Endothelial cell of umbilical vein (primary cell): ENCODE measurements at regions of chr19 and their contacts with region 1.

Region 1: GRCh38 chr19:13150187-13150930 is at the starts of genes IER2 and STX10:
- DNase-seq: peak; percentile 96
- H3K4me3 ChIP-seq: peak within 1 kb of the TSS; percentile 50 to 97 (median 69)
- H3K27ac ChIP-seq: peak within 1 kb of the TSS; percentile 90
- H3K4me1 ChIP-seq: peaks cover 12% of the 10 kb centered on the region
- H3K27me3 ChIP-seq: no peaks in the 10 kb centered on the region
- CTCF ChIP-seq: peak in 1 of 2 donors; percentile 55
- POLR2A ChIP-seq: peak; percentile 68
- total RNA-seq, gene IER2: 81.6 and 97.0 TPM in 2 replicates
- total RNA-seq, gene STX10: 63.1 and 67.9 TPM in 2 replicates

Region 2: DNA sequence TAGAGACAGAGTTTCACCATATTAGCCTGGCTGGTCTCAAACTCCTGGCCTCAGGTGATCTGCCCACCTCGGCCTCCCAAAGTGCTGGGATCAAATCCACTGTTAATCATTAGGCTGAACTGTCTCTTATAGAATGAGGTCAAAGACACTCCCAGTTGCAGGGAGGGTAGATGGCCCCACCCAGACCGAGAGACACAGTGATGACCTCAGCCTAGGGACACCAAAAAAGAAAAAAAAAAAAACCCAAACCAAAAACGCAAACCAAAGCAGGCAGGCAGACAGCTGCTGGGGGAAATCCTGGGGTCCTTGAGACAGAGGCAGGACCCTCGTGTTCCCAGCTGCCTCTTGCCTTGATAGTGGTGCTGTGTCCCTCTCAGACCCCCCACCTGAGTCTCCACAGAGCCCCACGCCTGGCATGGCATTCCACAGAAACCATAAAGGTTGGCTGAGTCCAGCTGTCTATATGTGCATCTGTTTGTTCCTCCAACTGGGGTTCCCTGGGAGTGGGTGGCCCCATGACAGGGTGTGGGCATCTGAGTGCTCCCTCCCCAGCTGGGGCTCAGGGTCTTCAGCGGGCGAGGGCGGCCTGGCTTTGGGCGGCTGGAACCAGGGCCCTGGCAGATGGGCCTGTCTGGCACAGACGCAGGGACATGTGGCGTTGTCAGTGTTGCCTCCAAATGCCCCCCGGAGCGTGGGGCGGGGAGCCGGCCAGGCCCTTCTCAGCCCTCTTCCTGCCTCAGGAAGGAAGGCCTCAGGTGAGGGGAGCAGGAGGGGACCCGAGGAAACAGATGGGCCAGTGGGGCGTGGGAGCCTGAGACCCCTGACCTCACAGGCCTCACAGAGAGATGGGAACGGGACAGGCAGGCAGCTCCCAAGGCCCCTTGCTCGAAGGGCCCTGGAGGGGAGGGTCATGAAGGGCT is 175.8 kb before region 1 on chr19:
- CTCF ChIA-PET with region 1: interaction called, 8 read pairs
- POLR2A ChIA-PET with region 1: no interaction called
- dilution Hi-C with region 1: no loop called
- intact Hi-C with region 1: loop called (anchors 5 kb)
- DNase-seq: no peak
- H3K4me3 ChIP-seq: no peak overlapping the region
- H3K27ac ChIP-seq: no peak overlapping the region
- H3K4me1 ChIP-seq: no peaks in the 10 kb centered on the region
- H3K27me3 ChIP-seq: no peaks in the 10 kb centered on the region
- CTCF ChIP-seq: no peak
- POLR2A ChIP-seq: no peak

Region 3: GRCh38 chr19:13104360-13104847 is 46.0 kb before region 1 on chr19:
- CTCF ChIA-PET with region 1: interaction called, 22 read pairs
- POLR2A ChIA-PET with region 1: interaction called, 8 read pairs
- dilution Hi-C with region 1: no loop called
- intact Hi-C with region 1: loop called (anchors 1 kb)
- DNase-seq: peak; percentile 94
- H3K4me3 ChIP-seq: no peak overlapping the region
- H3K27ac ChIP-seq: peak overlapping the region; percentile 60
- H3K4me1 ChIP-seq: peaks cover 41% of the 10 kb centered on the region
- H3K27me3 ChIP-seq: no peaks in the 10 kb centered on the region
- CTCF ChIP-seq: peak; percentile 85 to 95
- POLR2A ChIP-seq: peak; percentile 80

Region 4: DNA sequence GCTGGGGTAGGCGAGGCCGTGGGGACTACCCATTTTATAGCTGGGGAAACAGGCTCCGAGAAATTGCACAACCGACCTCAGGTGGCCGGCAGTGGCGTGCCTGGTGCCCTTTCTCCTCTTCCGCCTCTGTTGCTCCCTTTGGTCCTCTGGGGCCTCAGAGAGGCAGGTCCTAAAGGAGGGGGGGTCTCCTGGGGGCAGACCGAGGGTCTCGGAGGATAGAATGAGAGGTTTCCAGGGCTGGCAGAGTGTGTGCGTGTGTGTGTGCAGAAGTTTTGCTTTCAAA is 11.5 kb before region 1 on chr19:
- CTCF ChIA-PET with region 1: no interaction called
- POLR2A ChIA-PET with region 1: no interaction called
- dilution Hi-C with region 1: no loop called
- intact Hi-C with region 1: no loop called
- DNase-seq: no peak
- H3K4me3 ChIP-seq: no peak overlapping the region
- H3K27ac ChIP-seq: no peak overlapping the region
- H3K4me1 ChIP-seq: no peaks in the 10 kb centered on the region
- H3K27me3 ChIP-seq: no peaks in the 10 kb centered on the region
- CTCF ChIP-seq: no peak
- POLR2A ChIP-seq: no peak

Region 5: DNA sequence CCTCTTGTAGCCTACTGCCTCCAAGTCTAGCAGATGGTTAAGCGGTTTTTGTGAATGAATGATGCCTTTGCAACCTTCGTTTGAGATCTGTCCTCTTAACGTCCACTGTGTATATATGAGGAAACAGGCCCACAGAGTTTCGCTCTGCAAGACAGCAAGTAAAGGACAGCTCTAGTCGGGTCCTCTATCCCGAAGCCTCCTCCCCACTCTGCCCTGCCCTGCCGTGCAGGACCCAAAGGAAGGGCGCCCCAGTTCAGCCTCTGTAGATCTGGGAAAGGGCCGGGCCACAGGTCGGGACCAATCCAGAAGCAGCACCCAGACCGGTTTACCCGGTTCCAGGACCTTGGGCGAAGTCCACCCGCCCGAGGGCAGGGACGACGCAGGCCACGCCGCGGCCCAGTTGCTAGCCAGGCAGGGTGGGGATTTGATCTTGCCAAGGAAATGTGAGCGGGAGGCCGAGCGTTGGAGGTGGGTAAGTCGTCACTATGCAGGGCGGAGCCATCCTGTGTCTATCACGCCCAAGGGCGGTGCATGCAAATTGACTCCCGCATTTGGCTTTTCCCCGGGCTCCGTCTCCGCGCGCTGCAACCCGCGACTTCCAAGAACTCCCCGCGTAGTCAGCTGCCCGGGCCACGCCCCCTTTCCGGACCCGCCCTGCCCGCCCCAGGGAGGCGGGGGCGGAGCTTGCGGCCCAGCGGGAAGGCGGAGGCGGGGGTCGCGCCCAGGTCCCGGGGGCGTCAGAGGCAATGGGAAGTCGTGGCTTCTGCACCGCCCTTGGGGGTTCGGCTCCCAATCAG is 12.4 kb after region 1 on chr19:
- CTCF ChIA-PET with region 1: interaction called, 24 read pairs
- POLR2A ChIA-PET with region 1: interaction called, 25 read pairs
- dilution Hi-C with region 1: no loop called
- intact Hi-C with region 1: loop called (anchors 1 kb)
- DNase-seq: peak; percentile 97
- H3K4me3 ChIP-seq: peak overlapping the region in 1 of 3 experiments; percentile 28
- H3K27ac ChIP-seq: peak overlapping the region; percentile 99
- H3K4me1 ChIP-seq: peaks cover 42% of the 10 kb centered on the region
- H3K27me3 ChIP-seq: no peaks in the 10 kb centered on the region
- CTCF ChIP-seq: no peak
- POLR2A ChIP-seq: peak; percentile 69

Region 6: GRCh38 chr19:13262450-13262849 is 112.1 kb after region 1 on chr19:
- CTCF ChIA-PET with region 1: interaction called, 9 read pairs
- POLR2A ChIA-PET with region 1: interaction called, 4 read pairs
- dilution Hi-C with region 1: no loop called
- intact Hi-C with region 1: loop called (anchors 1 kb)
- DNase-seq: peak; percentile 70
- H3K4me3 ChIP-seq: no peak overlapping the region
- H3K27ac ChIP-seq: no peak overlapping the region
- H3K4me1 ChIP-seq: peaks cover 10% of the 10 kb centered on the region
- H3K27me3 ChIP-seq: peaks cover 0 to 2% of the 10 kb centered on the region in 2 experiments
- CTCF ChIP-seq: peak; percentile 32 to 46
- POLR2A ChIP-seq: no peak

Region 7: DNA sequence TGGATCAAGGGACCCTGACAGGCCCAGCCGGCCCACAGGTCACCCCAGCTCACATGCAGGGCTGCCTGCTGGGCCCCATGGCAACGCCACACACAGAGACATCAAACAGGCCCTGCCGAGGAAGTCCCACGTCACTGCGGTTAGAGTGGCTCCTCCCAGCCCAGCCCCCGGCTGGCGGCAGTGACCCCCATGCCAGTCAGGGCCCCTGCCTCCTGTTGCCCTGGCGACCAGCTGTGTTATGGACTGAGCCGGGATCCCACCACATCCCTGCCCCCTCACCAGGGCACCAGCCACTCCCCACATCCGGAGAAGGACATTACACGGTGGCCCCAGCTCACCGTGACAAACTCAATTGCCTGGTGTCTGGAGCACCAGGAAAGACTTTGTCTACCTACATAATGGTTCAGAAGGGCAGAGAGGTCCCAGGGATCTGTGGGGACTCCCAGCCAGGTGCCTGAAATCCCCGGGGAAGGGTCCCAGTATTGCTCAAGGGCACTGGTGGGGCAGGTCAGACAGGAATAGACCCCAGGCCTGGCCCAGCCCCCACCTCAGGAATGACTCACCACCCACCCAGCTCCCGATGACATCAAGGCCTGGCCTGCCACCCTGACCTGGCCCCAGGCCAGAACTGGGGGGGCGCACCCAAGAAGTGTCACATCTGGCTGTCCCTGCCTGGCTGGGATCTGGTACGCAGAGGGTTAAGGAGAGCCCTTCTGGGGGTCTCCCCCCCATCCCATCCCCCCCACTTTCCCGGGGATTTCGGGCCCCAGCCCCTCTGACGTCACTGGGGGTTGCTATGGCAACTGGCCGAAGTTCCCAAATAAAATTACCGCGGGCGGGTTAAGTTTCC is 696.4 kb after region 1 on chr19:
- CTCF ChIA-PET with region 1: no interaction called
- POLR2A ChIA-PET with region 1: no interaction called
- dilution Hi-C with region 1: no loop called
- intact Hi-C with region 1: loop called (anchors 2 kb)
- DNase-seq: peak; percentile 88
- H3K4me3 ChIP-seq: peak overlapping the region in 1 of 3 experiments; percentile 48
- H3K27ac ChIP-seq: peak overlapping the region; percentile 99
- H3K4me1 ChIP-seq: peaks cover 43% of the 10 kb centered on the region
- H3K27me3 ChIP-seq: no peaks in the 10 kb centered on the region
- CTCF ChIP-seq: no peak
- POLR2A ChIP-seq: no peak